ENCODE measurements at regions of chr6 and their contacts with region 1.

Region 1: GRCh38 chr6:13548500-13549210 is 25.7 kb upstream of the SIRT5 start:
- DNase-seq: no peak
- H3K4me3 ChIP-seq: no peak overlapping the region
- H3K27ac ChIP-seq: no peak overlapping the region
- H3K4me1 ChIP-seq: no peaks in the 10 kb centered on the region
- H3K27me3 ChIP-seq: no peaks in the 10 kb centered on the region
- CTCF ChIP-seq: no peak
- POLR2A ChIP-seq: no peak

Region 2: DNA sequence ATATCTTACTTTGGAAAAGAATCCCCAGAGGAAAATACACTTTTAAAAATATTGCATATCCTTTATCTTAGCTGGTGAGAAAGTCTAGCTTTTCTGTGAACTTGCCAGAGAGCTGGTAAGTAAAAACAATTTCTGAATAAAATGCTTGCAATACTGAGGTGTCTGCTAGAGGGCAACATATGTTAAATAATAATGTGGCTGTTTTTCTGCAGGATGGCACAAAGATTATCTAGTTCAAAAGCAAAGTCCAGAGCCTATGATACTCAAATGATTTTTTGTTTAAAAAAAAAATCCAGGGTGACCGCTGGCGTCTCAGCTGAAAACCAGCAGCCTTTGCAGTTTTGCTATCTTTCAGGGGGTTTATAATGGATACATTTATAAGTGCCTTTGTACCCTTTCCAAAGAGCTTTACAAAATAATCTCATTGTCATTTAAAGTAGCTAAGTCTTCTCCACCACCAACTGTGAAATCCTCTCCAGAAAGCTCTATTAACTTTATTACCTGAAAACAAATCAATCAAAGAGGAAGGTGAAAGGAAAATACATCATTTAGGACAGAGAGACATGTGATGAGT is 637.2 kb before region 1 on chr6:
- intact Hi-C with region 1: loop called (anchors 10 kb)
- DNase-seq: no peak
- H3K4me3 ChIP-seq: no peak overlapping the region
- H3K27ac ChIP-seq: no peak overlapping the region
- H3K4me1 ChIP-seq: peaks cover 0 to 4% (median 0%) of the 10 kb centered on the region in 6 donors
- H3K27me3 ChIP-seq: no peaks in the 10 kb centered on the region
- CTCF ChIP-seq: peak in 9 of 11 experiments; percentile 20 to 60 (median 51)
- POLR2A ChIP-seq: no peak

Region 3: DNA sequence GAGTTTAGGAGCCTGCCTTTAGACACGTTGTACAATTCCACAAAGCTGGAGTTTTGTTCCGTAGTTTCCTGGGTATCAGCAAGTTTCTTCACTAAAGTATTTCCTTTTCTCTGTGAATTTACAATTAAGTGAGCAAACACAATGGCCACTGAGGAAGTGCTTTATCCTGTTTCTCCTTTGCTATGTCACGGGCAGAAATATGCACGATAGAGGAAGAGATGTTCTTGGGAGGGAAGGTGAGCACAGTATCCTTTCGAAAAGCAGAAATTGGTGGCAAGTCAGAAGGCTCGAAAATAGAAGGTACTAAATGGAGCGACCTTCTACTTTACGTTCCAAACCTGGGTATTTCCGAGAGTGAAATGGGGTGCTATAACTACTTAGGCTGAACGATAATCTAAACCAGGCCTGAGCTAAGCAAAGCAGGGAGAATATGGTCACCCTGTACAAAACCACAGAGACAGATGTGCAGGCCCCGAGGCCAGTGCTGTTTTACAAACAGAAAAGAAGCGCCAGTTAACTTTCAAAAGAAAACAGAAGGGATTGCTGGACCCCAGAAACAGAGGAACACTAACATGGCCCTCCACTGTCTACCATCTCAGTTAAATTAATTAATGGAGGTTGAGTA is 480.0 kb before region 1 on chr6:
- intact Hi-C with region 1: no loop called
- DNase-seq: no peak
- H3K4me3 ChIP-seq: no peak overlapping the region
- H3K27ac ChIP-seq: peak overlapping the region in 3 of 8 donors; percentile 35 to 50 (median 48)
- H3K4me1 ChIP-seq: peaks cover 0 to 19% (median 0%) of the 10 kb centered on the region in 6 donors
- H3K27me3 ChIP-seq: no peaks in the 10 kb centered on the region
- CTCF ChIP-seq: no peak
- POLR2A ChIP-seq: no peak